AG04449 (cell line): ENCODE measurements at regions of chr11 and their contacts with region 1.

Region 1: GRCh38 chr11:61403658-61404057 is 11.3 kb downstream of the TMEM216 start:
- DNase-seq: no peak
- H3K4me3 ChIP-seq: no peak overlapping the region
- CTCF ChIP-seq: no peak

Region 2: GRCh38 chr11:61332797-61333549 is 70.7 kb before region 1 on chr11 and contains the starts of genes DDB1 and TKFC:
- CTCF ChIA-PET with region 1: interaction called, 24 read pairs
- POLR2A ChIA-PET with region 1: no interaction called
- DNase-seq: no peak
- H3K4me3 ChIP-seq: peak within 1 kb of the TSS; percentile 95
- CTCF ChIP-seq: no peak

Region 3: DNA sequence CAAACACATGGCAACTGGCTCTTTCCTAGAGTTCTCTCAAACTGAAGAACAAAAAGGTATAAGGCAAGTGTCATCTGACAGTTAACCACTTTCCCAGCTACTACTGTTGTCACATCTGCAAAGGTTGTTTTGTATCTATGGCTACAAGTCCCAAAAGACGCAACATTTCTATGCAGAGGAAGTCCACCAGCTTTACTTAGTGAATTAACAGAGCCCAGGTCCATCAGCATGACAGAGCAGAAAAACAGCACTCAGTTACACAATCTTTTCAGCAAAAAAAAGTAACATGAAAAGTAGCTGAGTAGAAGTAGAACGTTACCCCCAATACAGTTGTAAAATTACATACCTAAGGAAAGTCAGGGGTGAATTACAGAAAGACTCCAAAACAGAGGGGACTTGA is 14.0 kb after region 1 on chr11:
- CTCF ChIA-PET with region 1: no interaction called
- POLR2A ChIA-PET with region 1: no interaction called
- DNase-seq: no peak
- H3K4me3 ChIP-seq: no peak overlapping the region
- CTCF ChIP-seq: no peak